Transverse colon (tissue), 4 donors: ENCODE measurements at regions of chr1 and their contacts with region 1.

Region 1: DNA sequence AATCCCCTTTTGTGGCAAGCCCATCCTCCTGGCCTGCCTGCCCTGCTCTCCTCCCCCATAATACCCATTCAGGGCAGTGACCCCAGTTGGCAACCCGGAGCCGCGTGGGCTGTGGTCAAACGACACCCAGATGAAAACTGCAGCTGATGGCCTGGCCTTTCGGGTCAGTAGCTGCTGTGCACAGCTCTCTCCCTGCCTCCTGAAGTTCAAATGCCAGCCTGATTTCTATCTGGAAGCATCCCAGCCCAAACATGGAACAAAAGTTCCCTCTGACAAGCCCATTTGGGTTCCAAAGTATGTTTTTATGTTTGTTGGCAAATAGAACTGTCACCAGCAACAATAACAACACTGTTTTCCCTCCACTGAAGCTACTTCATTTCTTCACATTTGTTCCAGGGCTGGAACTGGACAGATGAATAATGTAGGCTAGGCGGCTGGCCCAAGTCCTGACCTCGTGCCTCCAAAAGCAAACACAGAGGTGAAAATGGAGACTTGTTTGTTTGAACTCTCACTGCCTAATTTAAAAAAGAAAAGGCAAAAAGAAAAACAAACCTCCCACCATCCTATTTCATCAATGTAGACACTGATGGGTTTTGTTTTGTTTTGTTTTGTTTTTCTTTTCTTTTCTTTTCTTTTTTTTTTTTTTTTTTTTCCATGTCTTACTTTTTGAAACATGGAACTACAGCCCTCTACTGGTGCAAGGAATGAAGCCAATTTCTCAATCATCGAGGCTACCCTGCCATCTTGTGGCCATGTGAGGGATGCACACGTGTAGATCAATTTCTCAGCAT is 179.0 kb downstream of the ADSS2 start:
- DNase-seq: peak; percentile 71
- H3K4me3 ChIP-seq: no peak overlapping the region
- H3K27ac ChIP-seq: peak overlapping the region; percentile 56 to 77 (median 66)
- H3K4me1 ChIP-seq: peaks cover 0 to 9% (median 3%) of the 10 kb centered on the region in 4 donors
- H3K27me3 ChIP-seq: no peaks in the 10 kb centered on the region
- CTCF ChIP-seq: peak; percentile 86 to 98 (median 93)
- EP300 ChIP-seq: no peak
- POLR2A ChIP-seq: no peak

Region 2: GRCh38 chr1:244047621-244048471 is 224.8 kb before region 1 on chr1:
- in situ Hi-C with region 1: loop called in 1 of 4 experiments (anchors 25 kb)
- intact Hi-C with region 1: no loop called
- DNase-seq: peak; percentile 99
- H3K4me3 ChIP-seq: peak overlapping the region; percentile 63 to 90 (median 82)
- H3K27ac ChIP-seq: peak overlapping the region; percentile 95 to 100 (median 96)
- H3K4me1 ChIP-seq: peaks cover 0 to 39% (median 17%) of the 10 kb centered on the region in 4 donors
- H3K27me3 ChIP-seq: no peaks in the 10 kb centered on the region
- CTCF ChIP-seq: no peak
- EP300 ChIP-seq: no peak
- POLR2A ChIP-seq: peak; percentile 99

Region 3: GRCh38 chr1:244128591-244129383 is 143.9 kb before region 1 on chr1:
- in situ Hi-C with region 1: no loop called
- intact Hi-C with region 1: no loop called
- DNase-seq: no peak
- H3K4me3 ChIP-seq: no peak overlapping the region
- H3K27ac ChIP-seq: no peak overlapping the region
- H3K4me1 ChIP-seq: no peaks in the 10 kb centered on the region
- H3K27me3 ChIP-seq: no peaks in the 10 kb centered on the region
- CTCF ChIP-seq: no peak
- EP300 ChIP-seq: no peak
- POLR2A ChIP-seq: no peak

Region 4: GRCh38 chr1:244291236-244292201 is 18.9 kb after region 1 on chr1:
- in situ Hi-C with region 1: no loop called
- intact Hi-C with region 1: no loop called
- DNase-seq: no peak
- H3K4me3 ChIP-seq: no peak overlapping the region
- H3K27ac ChIP-seq: no peak overlapping the region
- H3K4me1 ChIP-seq: no peaks in the 10 kb centered on the region
- H3K27me3 ChIP-seq: no peaks in the 10 kb centered on the region
- CTCF ChIP-seq: no peak
- EP300 ChIP-seq: no peak
- POLR2A ChIP-seq: no peak

Region 5: DNA sequence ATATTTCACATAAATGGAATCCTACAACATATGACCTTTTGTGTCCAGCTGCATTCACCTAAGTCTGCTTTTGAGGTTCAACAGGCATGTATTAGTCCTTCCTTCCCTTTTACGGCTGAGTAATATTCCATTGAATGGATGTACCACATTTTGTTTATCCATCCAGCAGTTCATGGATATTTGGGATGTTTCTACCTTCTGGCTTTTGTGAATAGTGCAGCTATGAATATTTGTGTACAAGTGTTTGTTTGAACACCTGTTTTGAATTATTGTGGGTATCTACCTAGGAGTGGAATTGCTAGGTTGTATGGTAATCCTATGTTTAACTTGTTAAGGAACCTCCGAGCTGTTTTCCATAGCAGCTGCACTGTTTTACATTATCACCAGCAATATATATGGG is 318.0 kb after region 1 on chr1:
- in situ Hi-C with region 1: no loop called
- intact Hi-C with region 1: no loop called
- DNase-seq: no peak
- H3K4me3 ChIP-seq: no peak overlapping the region
- H3K27ac ChIP-seq: no peak overlapping the region
- H3K4me1 ChIP-seq: no peaks in the 10 kb centered on the region
- H3K27me3 ChIP-seq: no peaks in the 10 kb centered on the region
- CTCF ChIP-seq: no peak
- EP300 ChIP-seq: no peak
- POLR2A ChIP-seq: no peak